Activated T-helper 1 cell treated with anti-CD3 and anti-CD28 coated beads, Interleukin-12 subunit alpha, Interleukin-12 subunit beta, Interleukin-2, Interleukin-4 antibody, amounts not matched to agents 30 ng/mL and 10 ng/mL and 1 ng/mL, durations not matched to agents 14 hours and 24 hours and 36 hours (primary cell): ENCODE measurements at regions of chr10 and their contacts with region 1.

Region 1: DNA sequence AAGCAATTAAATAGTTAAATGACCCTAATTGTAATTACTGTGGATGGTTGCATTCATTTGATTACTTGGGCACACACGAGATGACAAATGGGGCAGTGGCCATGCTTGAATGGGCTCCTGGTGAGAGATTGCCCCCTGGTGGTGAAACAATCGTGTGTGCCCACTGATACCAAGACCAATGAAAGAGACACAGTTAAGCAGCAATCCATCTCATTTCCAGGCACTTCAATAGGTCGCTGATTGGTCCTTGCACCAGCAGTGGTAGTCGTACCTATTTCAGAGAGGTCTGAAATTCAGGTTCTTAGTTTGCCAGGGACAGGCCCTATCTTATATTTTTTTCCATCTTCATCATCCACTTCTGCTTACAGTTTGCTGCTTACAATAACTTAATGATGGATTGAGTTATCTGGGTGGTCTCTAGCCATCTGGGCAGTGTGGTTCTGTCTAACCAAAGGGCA is 8.3 kb downstream of the PCBD1 start:
- DNase-seq: peak; percentile 65
- H3K4me3 Mint-ChIP-seq: no peak overlapping the region
- H3K27ac Mint-ChIP-seq: no peak overlapping the region
- H3K4me1 Mint-ChIP-seq: peaks cover 11% of the 10 kb centered on the region
- H3K27me3 Mint-ChIP-seq: no peaks in the 10 kb centered on the region

Region 2: DNA sequence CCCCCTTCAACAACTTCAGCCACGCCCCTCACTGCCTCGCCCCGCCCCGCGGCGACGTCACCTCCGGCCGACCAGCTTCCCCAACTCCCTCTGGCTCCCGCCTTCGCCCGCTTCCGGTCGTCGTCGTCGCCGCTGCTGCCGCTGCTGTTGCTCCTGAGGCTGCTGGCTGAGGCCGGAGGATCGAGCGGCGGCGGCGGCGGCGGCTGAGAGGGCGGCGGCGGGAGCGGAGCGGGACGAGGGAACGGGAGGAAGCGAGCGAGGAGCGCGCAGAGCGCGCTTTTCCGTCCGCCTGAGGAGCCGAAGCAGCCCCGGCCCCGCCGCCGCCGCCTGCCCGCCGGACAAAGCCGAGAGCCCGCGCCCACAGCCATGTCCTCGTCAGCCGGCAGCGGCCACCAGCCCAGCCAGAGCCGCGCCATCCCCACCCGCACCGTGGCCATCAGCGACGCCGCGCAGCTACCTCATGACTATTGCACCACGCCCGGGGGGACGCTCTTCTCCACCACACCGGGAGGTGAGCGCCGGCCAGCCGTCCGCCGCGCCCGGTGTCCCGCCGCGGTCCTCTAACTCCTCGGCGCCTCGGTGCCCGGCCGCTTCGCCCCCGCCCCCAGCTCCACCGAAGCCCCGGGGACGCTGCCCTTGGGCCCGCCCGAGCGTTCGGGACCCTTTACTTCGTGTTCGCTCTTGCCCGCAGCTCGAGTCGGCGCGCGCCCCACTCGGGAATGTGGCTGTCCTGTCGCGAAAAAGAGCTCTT is 475.9 kb before region 1 on chr10 and contains the start of gene EIF4EBP2:
- intact Hi-C with region 1: loop called (anchors 10 kb)
- DNase-seq: peak; percentile 99
- H3K4me3 Mint-ChIP-seq: peak within 1 kb of the TSS; percentile 96
- H3K27ac Mint-ChIP-seq: peak within 1 kb of the TSS; percentile 92
- H3K4me1 Mint-ChIP-seq: peaks cover 40% of the 10 kb centered on the region
- H3K27me3 Mint-ChIP-seq: peaks cover 2% of the 10 kb centered on the region
- total RNA-seq, gene EIF4EBP2: 36.6 and 37.7 TPM in 2 replicates

Region 3: GRCh38 chr10:70461215-70461986 is 418.7 kb before region 1 on chr10:
- intact Hi-C with region 1: loop called (anchors 5 kb)
- DNase-seq: peak; percentile 21
- H3K4me3 Mint-ChIP-seq: no peak overlapping the region
- H3K27ac Mint-ChIP-seq: no peak overlapping the region
- H3K4me1 Mint-ChIP-seq: no peaks in the 10 kb centered on the region
- H3K27me3 Mint-ChIP-seq: peaks cover 51% of the 10 kb centered on the region

Region 4: DNA sequence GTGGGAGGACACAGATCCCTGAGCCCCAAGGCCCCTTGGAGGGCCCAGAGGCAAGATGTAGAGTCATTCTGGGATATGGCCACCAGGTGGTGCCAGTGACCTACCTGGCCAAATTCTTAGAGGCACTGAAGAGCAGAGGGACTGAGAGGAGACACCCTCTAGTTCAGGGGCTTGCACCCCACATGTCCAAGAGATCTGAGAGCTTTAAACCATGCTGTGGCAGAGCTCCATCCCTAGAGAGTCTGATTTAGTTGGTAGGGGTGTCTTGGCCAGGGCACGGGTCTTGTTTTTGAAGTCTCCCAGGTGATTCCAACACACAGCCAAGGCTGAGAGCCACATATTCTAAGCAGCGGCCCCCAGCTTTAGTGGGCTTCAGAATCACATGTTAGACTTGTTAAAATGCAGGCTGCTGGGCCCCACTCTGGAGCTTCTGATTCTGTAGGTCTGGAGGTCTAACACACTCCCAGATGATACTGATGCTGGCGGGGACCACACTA is 330.1 kb before region 1 on chr10:
- intact Hi-C with region 1: loop called (anchors 1 kb)
- DNase-seq: peak; percentile 58
- H3K4me3 Mint-ChIP-seq: no peak overlapping the region
- H3K27ac Mint-ChIP-seq: no peak overlapping the region
- H3K4me1 Mint-ChIP-seq: peaks cover 4% of the 10 kb centered on the region
- H3K27me3 Mint-ChIP-seq: peaks cover 2% of the 10 kb centered on the region

Region 5: GRCh38 chr10:70758757-70759514 is 121.2 kb before region 1 on chr10:
- intact Hi-C with region 1: loop called (anchors 1 kb)
- DNase-seq: peak; percentile 49
- H3K4me3 Mint-ChIP-seq: no peak overlapping the region
- H3K27ac Mint-ChIP-seq: no peak overlapping the region
- H3K4me1 Mint-ChIP-seq: peaks cover 9% of the 10 kb centered on the region
- H3K27me3 Mint-ChIP-seq: no peaks in the 10 kb centered on the region

Region 6: GRCh38 chr10:70815504-70816219 is 64.4 kb before region 1 on chr10 and contains the start of gene SGPL1:
- intact Hi-C with region 1: loop called (anchors 1 kb)
- DNase-seq: peak; percentile 80
- H3K4me3 Mint-ChIP-seq: peak within 1 kb of the TSS; percentile 94
- H3K27ac Mint-ChIP-seq: peak within 1 kb of the TSS; percentile 76
- H3K4me1 Mint-ChIP-seq: peaks cover 28% of the 10 kb centered on the region
- H3K27me3 Mint-ChIP-seq: no peaks in the 10 kb centered on the region
- total RNA-seq, gene SGPL1: 72.9 and 79.0 TPM in 2 replicates

Region 7: DNA sequence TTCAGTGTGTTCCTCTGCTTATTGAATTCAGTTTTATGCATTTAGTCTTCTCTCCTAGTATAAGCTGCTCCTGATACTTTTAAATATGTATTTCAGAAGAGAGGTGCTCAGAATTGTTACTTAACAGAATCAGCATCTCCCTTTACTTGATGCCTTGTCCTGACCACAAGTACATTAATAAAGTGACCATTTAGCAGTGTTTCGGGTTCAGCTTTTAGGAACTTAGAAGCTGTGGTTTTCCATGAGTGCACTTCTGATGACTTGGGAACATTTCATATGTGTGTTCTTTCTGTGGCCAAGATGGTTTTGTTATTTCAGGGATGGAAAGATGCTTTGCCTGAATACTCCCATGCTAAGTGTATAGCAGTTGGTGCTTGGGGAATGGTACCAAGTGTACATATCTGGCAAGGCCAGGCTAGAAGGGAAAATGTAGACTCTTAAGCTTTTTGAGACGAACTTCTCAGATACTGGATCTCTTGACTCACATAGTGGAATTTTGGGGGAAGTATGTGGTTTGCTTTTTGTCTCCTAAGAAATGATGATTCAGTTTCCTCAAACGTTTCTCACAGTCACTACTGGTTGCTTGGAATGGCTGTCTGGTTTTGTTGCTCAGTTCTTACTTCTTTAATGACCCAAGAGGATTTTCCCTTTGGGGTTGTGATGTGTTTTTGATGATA is 47.1 kb before region 1 on chr10:
- intact Hi-C with region 1: loop called (anchors 1 kb)
- DNase-seq: no peak
- H3K4me3 Mint-ChIP-seq: no peak overlapping the region
- H3K27ac Mint-ChIP-seq: peak overlapping the region; percentile 71
- H3K4me1 Mint-ChIP-seq: peaks cover 33% of the 10 kb centered on the region
- H3K27me3 Mint-ChIP-seq: no peaks in the 10 kb centered on the region

Region 8: GRCh38 chr10:70918851-70919530 is 38.9 kb after region 1 on chr10:
- intact Hi-C with region 1: no loop called
- DNase-seq: no peak
- H3K4me3 Mint-ChIP-seq: no peak overlapping the region
- H3K27ac Mint-ChIP-seq: no peak overlapping the region
- H3K4me1 Mint-ChIP-seq: no peaks in the 10 kb centered on the region
- H3K27me3 Mint-ChIP-seq: peaks cover 10% of the 10 kb centered on the region

Region 9: GRCh38 chr10:71217266-71218045 is 337.4 kb after region 1 on chr10:
- intact Hi-C with region 1: no loop called
- DNase-seq: no peak
- H3K4me3 Mint-ChIP-seq: peak overlapping the region; percentile 41
- H3K27ac Mint-ChIP-seq: no peak overlapping the region
- H3K4me1 Mint-ChIP-seq: peaks cover 6% of the 10 kb centered on the region
- H3K27me3 Mint-ChIP-seq: peaks cover 57% of the 10 kb centered on the region

Region 10: GRCh38 chr10:71740069-71740468 is 860.0 kb after region 1 on chr10:
- intact Hi-C with region 1: no loop called
- DNase-seq: no peak
- H3K4me3 Mint-ChIP-seq: no peak overlapping the region
- H3K27ac Mint-ChIP-seq: no peak overlapping the region
- H3K4me1 Mint-ChIP-seq: peaks cover 96% of the 10 kb centered on the region
- H3K27me3 Mint-ChIP-seq: no peaks in the 10 kb centered on the region